Prostate gland (tissue), 2 donors: ENCODE measurements at regions of chr9 and their contacts with region 1.

Region 1: GRCh38 chr9:98255578-98256296 is at the start of gene TBC1D2:
- DNase-seq: peak; percentile 98
- H3K4me3 ChIP-seq: peak within 1 kb of the TSS; percentile 70 to 72
- H3K27ac ChIP-seq: peak within 1 kb of the TSS; percentile 95 to 96
- H3K4me1 ChIP-seq: no peaks in the 10 kb centered on the region
- H3K27me3 ChIP-seq: no peaks in the 10 kb centered on the region
- CTCF ChIP-seq: peak in 2 of 4 experiments; percentile 22 to 33
- POLR2A ChIP-seq: peak; percentile 88
- total RNA-seq, gene TBC1D2: 18.4 to 18.8 TPM

Region 2: DNA sequence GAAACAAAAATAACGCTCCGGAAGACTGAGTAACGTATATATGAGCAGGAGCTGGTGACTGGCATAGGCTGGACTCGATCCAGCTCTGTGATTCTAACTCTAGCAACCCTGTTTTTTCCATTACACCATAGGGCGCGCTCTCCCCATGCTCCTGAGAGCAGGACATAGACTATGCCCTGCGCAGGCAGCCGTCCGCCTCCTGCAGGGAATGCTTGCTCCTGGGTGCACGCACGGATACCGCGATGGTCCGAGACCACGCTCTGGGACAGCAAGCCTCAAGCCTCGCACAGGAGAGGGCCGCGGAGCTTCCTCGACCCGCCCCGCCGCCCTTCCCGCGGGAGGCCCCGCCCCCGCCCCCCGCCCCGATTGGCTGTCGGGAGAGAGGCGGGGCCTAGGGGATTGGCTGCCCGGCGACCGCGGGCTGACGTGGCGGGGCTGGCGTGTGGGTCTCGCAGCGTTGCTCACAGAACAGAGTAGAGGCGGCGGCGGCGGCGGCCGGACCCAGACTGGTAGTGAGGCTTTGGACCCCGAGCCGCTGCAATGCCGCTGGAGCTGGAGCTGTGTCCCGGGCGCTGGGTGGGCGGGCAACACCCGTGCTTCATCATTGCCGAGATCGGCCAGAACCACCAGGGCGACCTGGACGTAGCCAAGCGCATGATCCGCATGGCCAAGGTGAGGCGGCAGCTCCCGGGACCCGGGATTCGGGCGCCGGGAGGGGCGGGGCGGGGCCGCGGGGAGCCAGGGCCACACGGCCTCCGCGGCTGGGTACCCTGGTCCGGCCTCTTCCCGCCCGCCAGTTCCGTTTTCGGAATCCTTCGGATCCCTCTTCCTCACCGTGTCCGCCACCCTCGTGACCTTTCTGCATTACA is 199.2 kb before region 1 on chr9 and contains the start of gene NANS:
- intact Hi-C with region 1: loop called (anchors 5 kb)
- DNase-seq: peak; percentile 95
- H3K4me3 ChIP-seq: peak within 1 kb of the TSS; percentile 88 to 94
- H3K27ac ChIP-seq: peak within 1 kb of the TSS; percentile 97
- H3K4me1 ChIP-seq: no peaks in the 10 kb centered on the region
- H3K27me3 ChIP-seq: no peaks in the 10 kb centered on the region
- CTCF ChIP-seq: peak in 1 of 4 experiments; percentile 3
- POLR2A ChIP-seq: peak; percentile 99
- total RNA-seq, gene NANS: 160 to 318 TPM

Region 3: GRCh38 chr9:98215821-98216220 is 39.9 kb before region 1 on chr9:
- intact Hi-C with region 1: loop called (anchors 5 kb)
- DNase-seq: no peak
- H3K4me3 ChIP-seq: no peak overlapping the region
- H3K27ac ChIP-seq: peak overlapping the region; percentile 49 to 80
- H3K4me1 ChIP-seq: no peaks in the 10 kb centered on the region
- H3K27me3 ChIP-seq: no peaks in the 10 kb centered on the region
- CTCF ChIP-seq: peak in 2 of 4 experiments; percentile 29 to 39
- POLR2A ChIP-seq: no peak